GM18951 (cell line): ENCODE measurements at regions of chr17 and their contacts with region 1.

Region 1: GRCh38 chr17:55527540-55528118 is 16.4 kb upstream of the SMIM36 start:
- POLR2A ChIP-seq: no peak

Region 2: DNA sequence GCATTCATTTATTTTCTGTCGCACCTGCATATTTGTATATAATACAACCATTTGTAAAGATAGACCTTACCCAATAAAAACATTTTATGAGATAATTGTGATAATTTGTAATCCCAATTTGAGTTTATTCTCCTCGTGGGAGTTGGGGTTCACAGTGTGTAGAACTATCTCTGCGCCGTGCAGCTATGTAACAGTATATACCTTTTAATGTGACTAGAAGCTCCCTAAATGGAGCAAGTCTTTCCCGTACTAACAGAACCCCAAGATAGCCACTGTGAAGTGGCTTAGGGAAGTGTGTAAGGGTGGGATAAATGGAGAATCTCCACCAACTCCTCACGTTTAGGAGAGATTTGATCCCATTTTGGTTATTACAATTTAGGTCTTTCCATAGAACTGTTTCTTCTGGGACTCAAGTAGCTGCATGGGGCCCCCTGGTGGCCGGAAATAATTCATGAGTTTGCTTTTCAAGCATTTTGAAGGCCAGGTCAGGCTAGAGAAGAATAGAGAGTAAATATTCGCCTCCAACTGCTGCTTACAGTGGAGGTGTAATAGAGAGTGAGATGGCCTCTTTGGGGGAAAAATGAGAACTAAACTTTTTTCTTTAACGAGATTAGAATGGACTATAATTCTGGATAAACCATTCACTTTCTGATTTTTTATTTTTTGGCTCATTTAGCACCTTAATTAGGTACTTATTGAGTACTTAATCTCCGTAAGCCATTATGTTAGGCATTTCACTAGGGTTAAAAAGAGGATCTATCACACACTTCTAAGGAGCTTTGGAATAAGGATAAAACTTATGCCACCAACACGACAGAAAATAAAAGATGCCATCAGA is 190.5 kb after region 1 on chr17:
- in situ Hi-C with region 1: loop called (anchors 10 kb)
- POLR2A ChIP-seq: no peak